Tibial artery (tissue), 4 donors: ENCODE measurements at regions of chr3 and their contacts with region 1.

Region 1: DNA sequence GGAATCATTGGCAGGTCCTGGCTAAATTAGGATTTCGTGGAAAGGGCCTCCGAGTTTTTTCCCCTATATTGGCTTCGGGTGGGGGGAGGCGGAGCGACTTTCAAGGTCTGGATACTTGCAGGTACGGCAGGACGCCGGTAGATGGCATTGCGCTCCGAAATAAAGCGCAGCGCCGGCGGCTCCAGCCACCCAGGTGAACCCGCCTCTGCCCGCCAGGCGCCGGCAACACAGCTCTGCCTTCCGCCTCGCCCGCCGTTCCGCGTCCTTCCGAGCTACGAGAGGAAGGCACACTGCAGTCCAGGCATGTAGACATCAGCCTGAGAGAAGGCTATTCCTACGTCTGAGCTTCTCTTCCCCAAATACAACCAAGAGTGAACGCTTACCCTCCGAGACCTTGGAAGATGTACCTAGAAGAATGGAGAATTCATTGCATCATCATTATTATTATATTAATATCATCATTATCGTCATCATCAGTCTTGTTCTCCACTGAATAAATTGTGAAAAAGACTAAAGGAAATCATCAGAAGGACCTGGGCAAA is 514.1 kb downstream of the MECOM start:
- DNase-seq: peak; percentile 59 to 80
- H3K4me3 ChIP-seq: peak overlapping the region; percentile 9 to 32
- H3K27ac ChIP-seq: no peak overlapping the region
- H3K4me1 ChIP-seq: peaks cover 0 to 29% (median 14%) of the 10 kb centered on the region in 4 donors
- H3K27me3 ChIP-seq: peaks cover 0 to 46% of the 10 kb centered on the region in 2 donors
- CTCF ChIP-seq: peak; percentile 71 to 77

Region 2: DNA sequence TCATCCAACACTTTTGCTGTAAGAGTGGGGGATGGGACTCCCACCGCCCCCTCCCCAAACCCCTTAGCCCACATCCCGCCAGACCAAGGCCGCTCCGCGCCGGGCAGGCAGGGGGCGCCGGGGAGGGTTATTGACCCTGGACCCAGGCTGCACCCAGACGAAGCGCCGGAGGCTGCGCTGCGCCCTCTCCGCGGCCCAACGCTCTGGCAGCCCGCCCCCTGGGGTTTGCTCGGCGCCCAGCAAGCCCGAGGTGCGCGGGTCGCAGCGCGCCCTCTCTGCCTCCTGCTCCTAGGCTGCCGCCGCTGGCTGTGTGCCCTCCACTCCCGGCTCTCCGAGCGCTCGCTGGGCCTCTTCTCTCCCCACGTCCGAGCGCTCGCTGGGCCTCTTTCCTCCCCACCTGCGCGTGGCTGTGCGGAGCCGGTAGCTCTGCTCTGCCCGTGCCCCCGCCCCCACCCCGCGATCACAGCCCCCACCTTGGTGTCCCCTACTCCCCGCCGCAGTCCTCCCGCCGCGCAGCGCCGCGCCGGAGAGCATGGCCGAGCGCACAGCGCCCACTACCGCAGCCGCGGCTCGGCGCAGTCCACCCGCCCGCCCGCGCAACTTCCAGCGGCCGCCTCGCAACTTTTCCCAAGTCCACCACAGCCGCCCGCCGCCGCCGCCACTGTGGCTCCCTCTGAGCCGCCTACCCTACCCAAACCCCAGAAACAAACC is 512.9 kb after region 1 on chr3:
- intact Hi-C with region 1: loop called (anchors 5 kb)
- DNase-seq: peak; percentile 35 to 75
- H3K4me3 ChIP-seq: peak overlapping the region; percentile 52 to 62
- H3K27ac ChIP-seq: peak overlapping the region; percentile 66 to 76
- H3K4me1 ChIP-seq: peaks cover 0 to 48% (median 24%) of the 10 kb centered on the region in 4 donors
- H3K27me3 ChIP-seq: peaks cover 3 to 67% of the 10 kb centered on the region in 2 donors
- CTCF ChIP-seq: peak; percentile 21 to 50